GM12878 (cell line): ENCODE measurements at regions of chr11 and their contacts with region 1.

Region 1: GRCh38 chr11:93529707-93530467 is 13.3 kb downstream of the SMCO4 start:
- DNase-seq: no peak
- ATAC-seq: peak; percentile 10
- H3K4me3 ChIP-seq: 0 out of 2 replicates have a peak overlapping the region, but pooled peaks have one; percentile 34
- H3K27ac ChIP-seq: peak overlapping the region; percentile 59
- H3K4me1 ChIP-seq: peaks cover 64% of the 10 kb centered on the region
- H3K27me3 ChIP-seq: no peaks in the 10 kb centered on the region
- CTCF ChIP-seq: no peak
- EP300 ChIP-seq: peak; percentile 29 to 64; a peak in 2 of 4 replicates
- POLR2A ChIP-seq: peak; percentile 35; the same call in 1 of the 2 replicates
- RAD21 ChIP-seq: no peak

Region 2: DNA sequence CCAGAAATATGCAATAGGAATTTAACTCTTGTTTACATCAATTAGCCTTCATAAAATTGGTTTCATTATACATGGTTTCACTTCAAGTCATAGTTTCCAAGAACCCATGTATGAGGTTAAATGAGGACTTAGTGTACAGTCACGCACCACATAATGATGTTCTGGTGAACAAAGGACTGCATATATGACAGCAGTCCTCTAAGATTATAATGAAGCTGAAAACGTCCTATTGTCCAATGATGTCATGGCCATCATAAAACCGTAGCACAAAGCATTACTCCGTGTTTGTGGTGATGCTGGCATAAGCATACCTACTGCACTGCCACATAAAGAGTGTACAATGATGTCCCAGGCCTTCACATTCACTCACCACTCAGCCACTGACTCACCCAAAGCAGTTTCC is 17.8 kb before region 1 on chr11:
- CTCF ChIA-PET with region 1: interaction called, 16 read pairs
- POLR2A ChIA-PET with region 1: interaction called, 95 read pairs
- RAD21 ChIA-PET with region 1: interaction called, 33 read pairs
- SMC1A ChIA-PET with region 1: interaction called, 256 read pairs
- in situ Hi-C with region 1: no loop called
- intact Hi-C with region 1: loop called (anchors 2 kb)
- DNase-seq: peak; percentile 64
- ATAC-seq: peak; percentile 90
- H3K4me3 ChIP-seq: no peak overlapping the region
- H3K27ac ChIP-seq: peak overlapping the region; percentile 28
- H3K4me1 ChIP-seq: peaks cover 37% of the 10 kb centered on the region
- H3K27me3 ChIP-seq: no peaks in the 10 kb centered on the region
- CTCF ChIP-seq: no peak
- EP300 ChIP-seq: peak; percentile 86 to 93; a peak in 3 of 4 replicates
- POLR2A ChIP-seq: no peak
- RAD21 ChIP-seq: no peak

Region 3: DNA sequence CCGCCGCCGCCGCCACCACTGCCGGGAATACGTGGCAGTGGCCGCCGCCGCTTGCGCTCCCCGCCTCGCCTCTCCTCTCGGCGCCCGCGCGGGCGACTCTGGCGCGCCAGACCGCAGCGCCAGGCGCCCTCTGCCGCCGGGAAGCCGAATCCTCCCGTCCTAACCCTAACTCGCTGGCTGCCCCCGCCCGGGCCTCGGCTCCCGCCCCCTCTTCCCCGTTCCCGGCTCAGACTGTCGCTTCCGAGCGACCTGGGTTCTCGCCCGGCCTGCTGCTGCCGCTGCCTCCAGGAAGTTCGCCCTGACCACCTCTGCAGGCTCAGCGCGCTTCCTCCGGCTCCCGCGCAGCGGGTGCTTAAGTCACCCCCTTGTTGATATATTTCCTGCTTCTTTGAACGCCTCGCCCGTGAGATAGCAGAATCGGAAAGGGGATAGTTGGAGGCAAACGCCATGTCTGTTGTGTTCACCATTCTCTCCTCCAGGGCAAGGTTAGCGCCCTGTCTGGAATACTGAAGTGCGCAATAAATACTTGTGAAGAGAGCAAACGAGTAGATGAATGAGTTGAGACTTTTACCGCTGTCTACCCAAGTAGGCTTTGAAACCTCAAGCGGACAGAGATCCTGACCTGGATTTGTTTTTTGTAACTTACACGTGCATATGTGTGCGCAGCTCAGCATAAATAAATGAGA is 13.5 kb after region 1 on chr11 and contains the start of gene SMCO4:
- CTCF ChIA-PET with region 1: interaction called, 40 read pairs
- POLR2A ChIA-PET with region 1: interaction called, 191 read pairs
- RAD21 ChIA-PET with region 1: interaction called, 299 read pairs
- SMC1A ChIA-PET with region 1: interaction called, 275 read pairs
- in situ Hi-C with region 1: no loop called
- intact Hi-C with region 1: loop called (anchors 2 kb)
- DNase-seq: no peak
- ATAC-seq: peak; percentile 78
- H3K4me3 ChIP-seq: peak within 1 kb of the TSS; percentile 91
- H3K27ac ChIP-seq: peak within 1 kb of the TSS; percentile 45
- H3K4me1 ChIP-seq: peaks cover 12% of the 10 kb centered on the region
- H3K27me3 ChIP-seq: no peaks in the 10 kb centered on the region
- CTCF ChIP-seq: peak; percentile 52 to 90 (median 73)
- EP300 ChIP-seq: no peak
- POLR2A ChIP-seq: peak; percentile 58
- RAD21 ChIP-seq: peak; percentile 82
- polyA plus RNA-seq, gene SMCO4: 3.6 to 8.1 TPM

Region 4: DNA sequence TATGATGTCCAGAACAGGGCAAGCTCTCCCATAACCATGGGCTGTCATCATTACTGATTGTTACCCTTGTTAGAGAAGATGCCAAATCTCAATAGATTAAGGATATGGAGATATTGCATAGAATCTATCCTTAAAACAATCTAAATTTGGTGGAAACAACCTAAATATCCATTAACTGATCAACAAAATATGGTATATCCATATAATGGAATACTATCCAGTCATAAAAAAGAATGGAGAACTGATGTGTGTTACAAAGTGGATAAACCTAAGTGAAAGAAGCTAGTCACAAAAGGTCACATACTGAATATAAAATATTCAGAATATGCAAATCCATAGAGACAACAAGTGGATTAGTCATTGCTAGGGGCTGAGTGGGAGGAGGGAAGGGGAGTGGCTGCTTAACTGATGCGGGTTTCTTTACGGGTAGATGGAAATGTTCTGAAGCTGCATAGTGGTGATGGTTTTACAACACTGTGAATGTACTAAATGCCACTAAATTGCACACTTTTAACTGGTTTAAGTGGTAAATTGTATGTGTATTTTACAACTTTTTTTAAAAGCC is 49.4 kb after region 1 on chr11:
- CTCF ChIA-PET with region 1: no interaction called
- POLR2A ChIA-PET with region 1: no interaction called
- RAD21 ChIA-PET with region 1: no interaction called
- SMC1A ChIA-PET with region 1: no interaction called
- in situ Hi-C with region 1: no loop called
- intact Hi-C with region 1: no loop called
- DNase-seq: no peak
- ATAC-seq: no peak
- H3K4me3 ChIP-seq: no peak overlapping the region
- H3K27ac ChIP-seq: no peak overlapping the region
- H3K4me1 ChIP-seq: no peaks in the 10 kb centered on the region
- H3K27me3 ChIP-seq: no peaks in the 10 kb centered on the region
- CTCF ChIP-seq: no peak
- EP300 ChIP-seq: no peak
- POLR2A ChIP-seq: no peak
- RAD21 ChIP-seq: no peak

Region 5: DNA sequence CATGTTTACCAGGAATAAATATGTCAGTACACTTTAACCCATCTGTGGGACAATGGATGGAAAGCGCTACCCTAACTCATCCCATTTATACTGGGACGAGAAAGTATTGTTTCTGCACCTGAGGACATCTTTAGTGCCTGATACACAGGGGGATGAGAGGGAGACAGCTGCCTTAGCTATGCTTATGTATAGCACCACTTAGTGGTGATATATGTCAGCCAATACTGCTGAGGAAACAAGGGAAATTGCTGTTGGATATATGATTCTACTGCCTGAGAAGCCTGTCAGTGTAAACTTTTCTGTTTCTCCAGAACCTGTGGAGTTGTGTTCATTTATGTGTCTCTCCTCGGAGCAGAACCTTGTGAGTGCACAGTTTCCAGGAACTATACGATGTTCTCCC is 118.3 kb after region 1 on chr11:
- CTCF ChIA-PET with region 1: no interaction called
- POLR2A ChIA-PET with region 1: no interaction called
- RAD21 ChIA-PET with region 1: no interaction called
- SMC1A ChIA-PET with region 1: no interaction called
- in situ Hi-C with region 1: no loop called
- intact Hi-C with region 1: no loop called
- DNase-seq: no peak
- ATAC-seq: peak; percentile 77
- H3K4me3 ChIP-seq: no peak overlapping the region
- H3K27ac ChIP-seq: no peak overlapping the region
- H3K4me1 ChIP-seq: no peaks in the 10 kb centered on the region; the same call in 1 of the 2 replicates
- H3K27me3 ChIP-seq: no peaks in the 10 kb centered on the region
- CTCF ChIP-seq: peak; percentile 31 to 61 (median 59); a peak in 5 of 6 replicates
- EP300 ChIP-seq: no peak
- POLR2A ChIP-seq: no peak
- RAD21 ChIP-seq: peak; percentile 72

Region 6: GRCh38 chr11:93662177-93662575 is 132.3 kb after region 1 on chr11:
- CTCF ChIA-PET with region 1: no interaction called
- POLR2A ChIA-PET with region 1: no interaction called
- RAD21 ChIA-PET with region 1: no interaction called
- SMC1A ChIA-PET with region 1: interaction called, 3 read pairs
- in situ Hi-C with region 1: no loop called
- intact Hi-C with region 1: loop called (anchors 1 kb)
- DNase-seq: no peak
- ATAC-seq: peak; percentile 13
- H3K4me3 ChIP-seq: peak overlapping the region; percentile 80
- H3K27ac ChIP-seq: peak overlapping the region; percentile 83
- H3K4me1 ChIP-seq: peaks cover 4% of the 10 kb centered on the region; the same call in 1 of the 2 replicates
- H3K27me3 ChIP-seq: no peaks in the 10 kb centered on the region
- CTCF ChIP-seq: no peak
- EP300 ChIP-seq: no peak
- POLR2A ChIP-seq: no peak
- RAD21 ChIP-seq: no peak

Region 7: DNA sequence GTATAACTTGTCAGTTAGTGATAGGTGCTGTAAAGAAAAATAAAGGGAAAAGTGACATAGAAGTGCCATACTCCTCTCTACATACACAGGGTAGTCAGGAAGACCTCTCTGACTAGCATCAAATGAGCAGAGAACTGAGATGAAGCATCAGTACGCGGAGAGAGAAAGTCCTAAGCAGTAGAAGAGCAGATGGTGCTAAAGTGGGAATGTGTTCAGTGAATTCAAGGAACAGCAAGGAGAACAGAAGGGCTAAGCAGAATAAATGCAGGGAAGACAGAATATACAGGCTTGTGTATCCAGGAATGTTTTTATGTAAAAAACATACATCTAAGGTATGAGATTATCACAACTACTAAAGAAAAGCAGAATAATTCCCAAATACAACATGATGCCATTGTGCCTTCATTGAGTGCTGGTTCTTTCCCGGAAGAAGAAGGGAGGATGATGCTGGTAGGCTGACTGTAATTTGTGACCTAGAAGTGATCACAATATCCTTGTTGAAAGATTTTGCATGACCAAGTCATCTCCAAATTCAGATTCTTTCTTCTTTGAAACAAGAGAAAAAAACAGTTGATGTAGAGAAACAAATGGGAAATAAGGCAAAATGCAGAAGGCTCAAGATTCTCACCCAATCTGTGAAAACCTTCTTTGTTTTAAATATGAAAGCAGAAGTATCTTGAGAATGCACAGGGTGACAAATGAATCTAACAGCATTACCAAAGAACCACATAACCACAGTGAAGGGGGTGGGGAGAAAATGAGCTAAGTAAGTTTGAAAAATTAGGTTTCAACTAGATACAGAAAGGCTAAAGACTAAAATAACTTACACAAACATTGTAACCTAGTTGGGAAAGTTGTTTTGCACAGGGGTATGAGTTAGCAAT is 943.3 kb after region 1 on chr11:
- CTCF ChIA-PET with region 1: no interaction called
- POLR2A ChIA-PET with region 1: no interaction called
- RAD21 ChIA-PET with region 1: no interaction called
- SMC1A ChIA-PET with region 1: no interaction called
- in situ Hi-C with region 1: no loop called
- intact Hi-C with region 1: loop called (anchors 10 kb)
- DNase-seq: peak; percentile 88
- ATAC-seq: peak; percentile 82
- H3K4me3 ChIP-seq: peak overlapping the region; percentile 11; the same call in 1 of the 2 replicates
- H3K27ac ChIP-seq: peak overlapping the region; percentile 69
- H3K4me1 ChIP-seq: peaks cover 48% of the 10 kb centered on the region
- H3K27me3 ChIP-seq: no peaks in the 10 kb centered on the region
- CTCF ChIP-seq: no peak
- EP300 ChIP-seq: peak; percentile 96 to 97
- POLR2A ChIP-seq: no peak
- RAD21 ChIP-seq: no peak